Activated CD4-positive, alpha-beta T cell treated with anti-CD3 and anti-CD28 coated beads for 36 hours (primary cell): ENCODE measurements at regions of chr20 and their contacts with region 1.

Region 1: GRCh38 chr20:57089691-57090150 is 176.7 kb downstream of the BMP7 start:
- DNase-seq: peak; percentile 87
- ATAC-seq: peak; percentile 80
- H3K4me3 Mint-ChIP-seq: no peak overlapping the region
- H3K27ac Mint-ChIP-seq: no peak overlapping the region
- H3K4me1 Mint-ChIP-seq: peaks cover 15% of the 10 kb centered on the region
- H3K27me3 Mint-ChIP-seq: peaks cover 9% of the 10 kb centered on the region

Region 2: DNA sequence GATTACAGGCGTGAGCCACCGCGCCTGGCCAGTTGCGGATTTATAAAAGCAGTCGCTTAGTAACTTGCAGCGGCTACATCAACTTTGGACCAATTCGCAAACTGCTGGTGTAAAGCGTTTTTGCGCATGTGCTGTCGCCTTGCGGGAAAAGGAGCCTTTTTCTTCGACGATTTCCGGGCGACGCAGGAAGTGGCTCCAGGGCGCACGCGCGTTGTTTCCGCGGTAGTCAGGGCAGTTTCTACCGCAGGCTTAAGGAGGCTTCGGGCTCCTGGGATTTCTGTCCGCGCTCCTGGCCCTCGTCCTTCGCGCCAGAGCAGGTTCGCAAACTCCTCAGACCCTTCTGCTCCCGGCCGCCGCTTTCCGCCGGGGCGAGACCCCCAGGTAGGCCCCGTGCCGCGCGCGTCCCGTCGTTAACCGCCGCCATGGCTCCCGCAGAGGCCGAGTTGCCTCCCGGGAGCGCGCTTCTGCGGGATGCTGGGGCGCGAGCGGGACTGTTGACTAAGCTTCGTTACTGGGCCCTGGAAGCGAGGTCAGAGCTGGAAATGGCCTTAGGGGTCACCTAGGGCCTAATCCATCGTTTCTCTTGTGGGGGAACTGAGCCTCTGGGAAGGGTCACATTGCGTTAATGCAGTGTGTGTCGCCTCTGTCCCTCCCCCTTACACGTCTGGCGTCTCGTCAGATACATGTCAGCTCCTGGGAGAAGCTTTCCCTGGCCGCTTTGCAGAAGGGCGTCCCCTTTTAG is 261.5 kb after region 1 on chr20 and contains the start of gene RAE1:
- CTCF ChIA-PET with region 1: interaction called, 14 read pairs
- POLR2A ChIA-PET with region 1: no interaction called
- intact Hi-C with region 1: loop called (anchors 1 kb)
- DNase-seq: peak; percentile 94
- ATAC-seq: peak; percentile 84
- H3K4me3 Mint-ChIP-seq: peak within 1 kb of the TSS; percentile 96
- H3K27ac Mint-ChIP-seq: peak within 1 kb of the TSS; percentile 89
- H3K4me1 Mint-ChIP-seq: peaks cover 37% of the 10 kb centered on the region
- H3K27me3 Mint-ChIP-seq: no peaks in the 10 kb centered on the region
- total RNA-seq, gene RAE1: 42.7 to 48.9 TPM